ENCODE measurements at regions of chr1 and their contacts with region 1.

Region 1: GRCh38 chr1:85321237-85321964 is 45.0 kb upstream of the BCL10 start:
- DNase-seq: peak; percentile 75
- ATAC-seq: no peak
- H3K4me3 ChIP-seq: no peak overlapping the region
- H3K27ac ChIP-seq: peak overlapping the region; percentile 58
- H3K4me1 ChIP-seq: peaks cover 30% of the 10 kb centered on the region
- H3K27me3 ChIP-seq: no peaks in the 10 kb centered on the region
- CTCF ChIP-seq: no peak
- POLR2A ChIP-seq: no peak
- RAD21 ChIP-seq: no peak

Region 2: GRCh38 chr1:85049735-85050166 is 271.6 kb before region 1 on chr1:
- CTCF ChIA-PET with region 1: no interaction called
- POLR2A ChIA-PET with region 1: no interaction called
- dilution Hi-C with region 1: no loop called
- in situ Hi-C with region 1: no loop called
- intact Hi-C with region 1: no loop called
- DNase-seq: no peak
- ATAC-seq: no peak
- H3K4me3 ChIP-seq: no peak overlapping the region
- H3K27ac ChIP-seq: no peak overlapping the region
- H3K4me1 ChIP-seq: no peaks in the 10 kb centered on the region
- H3K27me3 ChIP-seq: peaks cover 55% of the 10 kb centered on the region
- CTCF ChIP-seq: no peak
- POLR2A ChIP-seq: no peak
- RAD21 ChIP-seq: no peak

Region 3: DNA sequence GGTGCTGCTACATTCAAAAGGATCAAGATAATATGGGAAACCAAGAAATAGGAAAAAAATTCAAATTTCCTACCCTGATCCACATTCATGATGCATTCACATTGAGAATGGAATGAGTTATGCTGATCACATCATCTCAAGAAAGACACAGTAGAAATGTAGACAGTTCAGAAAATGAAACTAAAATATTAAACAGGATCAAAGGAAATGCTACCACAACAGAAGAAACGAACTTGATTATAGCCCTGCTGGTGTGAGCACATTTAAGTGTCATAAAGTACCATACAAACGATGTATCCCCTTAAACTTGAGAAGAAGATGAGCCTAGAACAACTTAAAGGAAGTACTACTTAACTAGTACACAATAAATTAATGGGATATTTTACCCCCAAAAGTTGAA is 141.9 kb before region 1 on chr1:
- CTCF ChIA-PET with region 1: no interaction called
- POLR2A ChIA-PET with region 1: no interaction called
- dilution Hi-C with region 1: no loop called
- in situ Hi-C with region 1: no loop called
- intact Hi-C with region 1: no loop called
- DNase-seq: no peak
- ATAC-seq: no peak
- H3K4me3 ChIP-seq: no peak overlapping the region
- H3K27ac ChIP-seq: no peak overlapping the region
- H3K4me1 ChIP-seq: no peaks in the 10 kb centered on the region
- H3K27me3 ChIP-seq: no peaks in the 10 kb centered on the region
- CTCF ChIP-seq: no peak
- POLR2A ChIP-seq: no peak
- RAD21 ChIP-seq: no peak

Region 4: GRCh38 chr1:85387781-85388180 is 66.4 kb after region 1 on chr1:
- CTCF ChIA-PET with region 1: no interaction called
- POLR2A ChIA-PET with region 1: no interaction called
- dilution Hi-C with region 1: no loop called
- in situ Hi-C with region 1: no loop called
- intact Hi-C with region 1: no loop called
- DNase-seq: no peak
- ATAC-seq: no peak
- H3K4me3 ChIP-seq: no peak overlapping the region
- H3K27ac ChIP-seq: no peak overlapping the region
- H3K4me1 ChIP-seq: no peaks in the 10 kb centered on the region; the same call in 1 of the 2 replicates
- H3K27me3 ChIP-seq: no peaks in the 10 kb centered on the region
- CTCF ChIP-seq: no peak
- POLR2A ChIP-seq: no peak
- RAD21 ChIP-seq: no peak

Region 5: GRCh38 chr1:85447006-85447943 is 125.9 kb after region 1 on chr1:
- CTCF ChIA-PET with region 1: no interaction called
- POLR2A ChIA-PET with region 1: interaction called, 27 read pairs
- dilution Hi-C with region 1: no loop called
- in situ Hi-C with region 1: no loop called
- intact Hi-C with region 1: no loop called
- DNase-seq: peak; percentile 61
- ATAC-seq: peak; percentile 33
- H3K4me3 ChIP-seq: no peak overlapping the region
- H3K27ac ChIP-seq: peak overlapping the region; percentile 58; the same call in 1 of the 2 replicates
- H3K4me1 ChIP-seq: peaks cover 22% of the 10 kb centered on the region
- H3K27me3 ChIP-seq: no peaks in the 10 kb centered on the region
- CTCF ChIP-seq: no peak
- POLR2A ChIP-seq: no peak
- RAD21 ChIP-seq: no peak